Right lobe of liver (tissue), 6 donors: ENCODE measurements at regions of chr5 and their contacts with region 1.

Region 1: GRCh38 chr5:14264604-14265316 is 121.6 kb downstream of the TRIO start:
- DNase-seq: peak; percentile 87 to 91 (median 91)
- ATAC-seq: peak; percentile 95 to 99 (median 98)
- H3K4me3 ChIP-seq: peak overlapping the region in 1 of 3 donors; percentile 17
- H3K27ac ChIP-seq: peak overlapping the region in 1 of 3 donors; percentile 32
- H3K4me1 ChIP-seq: peaks cover 0 to 12% (median 6%) of the 10 kb centered on the region in 4 donors
- H3K27me3 ChIP-seq: no peaks in the 10 kb centered on the region
- CTCF ChIP-seq: no peak
- POLR2A ChIP-seq: peak; percentile 50

Region 2: DNA sequence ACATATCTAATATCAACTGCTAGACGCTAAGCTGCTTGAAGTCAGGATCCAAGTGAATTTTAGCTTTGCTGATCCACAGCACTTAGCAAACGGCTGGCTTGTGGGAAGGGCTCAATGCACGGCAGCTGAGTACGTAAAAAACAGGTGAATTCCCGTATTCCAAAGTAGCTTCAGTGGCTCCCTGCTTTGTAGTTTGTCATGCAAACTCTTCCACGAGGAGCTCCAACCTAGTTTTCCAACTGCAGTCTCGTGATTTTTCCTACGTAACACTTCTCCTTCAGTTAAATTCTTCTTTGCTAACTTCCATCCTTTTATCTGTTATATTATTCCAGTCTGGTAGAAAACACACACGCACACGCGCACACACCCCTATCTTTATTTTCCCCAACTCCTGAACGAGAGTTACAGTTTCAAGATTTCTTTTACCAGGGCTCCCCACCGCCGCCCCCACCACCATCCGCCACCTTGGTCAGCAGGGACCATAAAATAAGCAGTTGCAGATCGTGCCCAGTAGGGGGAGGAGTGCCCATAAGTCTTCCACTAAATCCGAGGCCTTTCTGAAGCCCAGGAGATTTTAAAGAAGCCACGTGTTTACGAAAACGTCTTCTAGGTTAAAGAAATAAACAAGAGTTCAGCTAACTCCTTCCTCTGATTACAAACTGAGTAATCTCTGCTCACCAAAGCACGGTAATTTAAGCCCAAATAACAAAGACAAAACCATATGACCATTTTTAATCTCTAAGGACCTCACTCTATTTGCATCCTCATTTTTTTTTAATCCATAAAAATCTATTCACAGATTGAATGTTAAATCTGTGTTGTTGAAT is 156.4 kb before region 1 on chr5:
- intact Hi-C with region 1: loop called in 1 of 2 experiments (anchors 5 kb)
- DNase-seq: peak in 2 of 3 donors; percentile 43 to 68
- ATAC-seq: peak; percentile 95 to 98 (median 96)
- H3K4me3 ChIP-seq: peak overlapping the region; percentile 19 to 47 (median 35)
- H3K27ac ChIP-seq: no peak overlapping the region
- H3K4me1 ChIP-seq: peaks cover 0 to 8% (median 0%) of the 10 kb centered on the region in 4 donors
- H3K27me3 ChIP-seq: no peaks in the 10 kb centered on the region
- CTCF ChIP-seq: peak; percentile 63 to 72 (median 68)
- POLR2A ChIP-seq: no peak

Region 3: GRCh38 chr5:14142827-14143548 is 121.8 kb before region 1 on chr5 and contains the start of gene TRIO:
- intact Hi-C with region 1: no loop called
- DNase-seq: peak; percentile 91 to 95 (median 92)
- ATAC-seq: peak; percentile 84 to 89 (median 86)
- H3K4me3 ChIP-seq: peak within 1 kb of the TSS; percentile 72 to 75 (median 73)
- H3K27ac ChIP-seq: peak within 1 kb of the TSS; percentile 89 to 94 (median 91)
- H3K4me1 ChIP-seq: peaks cover 0 to 28% (median 12%) of the 10 kb centered on the region in 4 donors
- H3K27me3 ChIP-seq: no peaks in the 10 kb centered on the region
- CTCF ChIP-seq: peak; percentile 48 to 58 (median 52)
- POLR2A ChIP-seq: peak; percentile 63
- total RNA-seq, gene TRIO: 34.7 to 63.5 (median 50.2) TPM